Psoas muscle (tissue), 8 donors: ENCODE measurements at regions of chr7 and their contacts with region 1.

Region 1: GRCh38 chr7:6035686-6036085 is 4.5 kb downstream of the ANKRD61 start:
- DNase-seq: no peak
- ATAC-seq: no peak
- H3K4me3 ChIP-seq: no peak overlapping the region
- H3K27ac ChIP-seq: no peak overlapping the region
- H3K4me1 ChIP-seq: peaks cover 6% of the 10 kb centered on the region
- H3K27me3 ChIP-seq: no peaks in the 10 kb centered on the region
- CTCF ChIP-seq: no peak

Region 2: DNA sequence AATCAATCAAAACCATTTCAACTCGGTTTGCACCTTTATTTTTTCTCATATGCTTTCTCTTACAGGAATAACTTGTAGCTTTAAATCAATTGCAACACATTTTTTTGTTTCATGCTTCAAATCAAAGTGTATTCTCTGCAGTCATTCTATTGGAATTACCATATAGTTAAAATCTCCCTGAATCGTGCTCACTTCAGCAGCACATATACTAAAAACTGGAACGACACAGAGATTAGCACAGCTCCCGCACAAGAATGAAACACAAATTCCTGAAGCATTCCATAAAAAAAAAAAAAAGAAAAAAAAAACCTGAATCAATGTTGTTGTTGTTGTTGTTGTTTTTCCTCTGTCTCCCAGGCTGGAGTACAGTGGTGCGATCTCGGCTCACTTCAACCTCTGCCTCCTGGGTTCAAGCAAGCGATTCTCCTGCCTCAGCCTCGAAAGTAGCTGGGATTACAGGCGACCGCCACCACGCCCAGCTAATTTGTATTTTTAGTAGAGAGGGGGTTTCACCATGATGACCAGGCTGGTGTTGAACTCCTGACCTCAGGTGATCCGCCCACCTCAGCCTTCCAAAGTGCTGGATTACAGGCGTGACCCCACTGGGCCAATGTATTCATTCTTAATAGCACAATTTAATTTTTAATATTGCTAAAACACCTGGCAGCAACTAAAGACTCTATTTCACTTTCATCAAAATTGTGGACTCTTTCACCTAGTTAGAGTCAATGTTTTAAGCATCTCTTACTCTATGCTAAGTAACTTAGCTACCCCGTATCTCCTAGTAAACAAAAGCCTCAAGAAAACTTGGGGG is 21.8 kb after region 1 on chr7:
- intact Hi-C with region 1: no loop called
- DNase-seq: no peak
- ATAC-seq: no peak
- H3K4me3 ChIP-seq: peak overlapping the region; percentile 99
- H3K27ac ChIP-seq: no peak overlapping the region
- H3K4me1 ChIP-seq: peaks cover 12% of the 10 kb centered on the region
- H3K27me3 ChIP-seq: no peaks in the 10 kb centered on the region
- CTCF ChIP-seq: no peak

Region 3: DNA sequence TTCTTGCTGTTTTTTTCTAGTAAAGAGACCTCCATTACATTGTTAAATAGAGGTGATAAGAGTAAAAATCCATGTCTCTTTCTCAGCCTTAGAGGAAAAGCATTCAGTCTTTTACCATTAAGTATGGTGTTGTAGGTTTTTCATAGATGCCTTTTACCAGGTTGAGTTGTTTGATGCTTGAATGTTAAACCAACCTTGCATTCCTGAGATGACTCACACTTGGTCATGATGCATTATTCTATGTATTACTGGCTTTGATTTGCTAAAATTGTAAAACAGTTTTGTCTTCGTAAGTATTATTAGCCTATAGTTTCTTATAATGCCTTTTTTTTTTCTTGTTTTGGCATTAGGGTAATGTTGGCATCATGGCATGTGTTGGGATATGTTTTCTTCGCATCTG is 85.5 kb after region 1 on chr7:
- intact Hi-C with region 1: loop called in 1 of 2 experiments (anchors 5 kb)
- DNase-seq: no peak
- ATAC-seq: no peak
- H3K4me3 ChIP-seq: no peak overlapping the region
- H3K27ac ChIP-seq: no peak overlapping the region
- H3K4me1 ChIP-seq: no peaks in the 10 kb centered on the region
- H3K27me3 ChIP-seq: no peaks in the 10 kb centered on the region
- CTCF ChIP-seq: no peak